Heart left ventricle (tissue), 16 donors: ENCODE measurements at regions of chr11 and their contacts with region 1.

Region 1: GRCh38 chr11:72585762-72586311 is 88.4 kb downstream of the PDE2A start:
- DNase-seq: peak; percentile 52 to 76 (median 59)
- ATAC-seq: peak; percentile 55 to 72 (median 66)
- H3K4me3 ChIP-seq: no peak overlapping the region
- H3K27ac ChIP-seq: no peak overlapping the region
- H3K4me1 ChIP-seq: peaks cover 0 to 34% (median 11%) of the 10 kb centered on the region in 12 donors
- H3K27me3 ChIP-seq: peaks cover 0 to 53% (median 29%) of the 10 kb centered on the region in 9 donors
- CTCF ChIP-seq: peak; percentile 90 to 96 (median 95)
- POLR2A ChIP-seq: no peak

Region 2: GRCh38 chr11:72511393-72512047 is 74.3 kb before region 1 on chr11:
- intact Hi-C with region 1: no loop called
- DNase-seq: no peak
- ATAC-seq: no peak
- H3K4me3 ChIP-seq: no peak overlapping the region
- H3K27ac ChIP-seq: no peak overlapping the region
- H3K4me1 ChIP-seq: no peaks in the 10 kb centered on the region
- H3K27me3 ChIP-seq: peaks cover 0 to 4% (median 0%) of the 10 kb centered on the region in 9 donors
- CTCF ChIP-seq: no peak
- POLR2A ChIP-seq: no peak

Region 3: DNA sequence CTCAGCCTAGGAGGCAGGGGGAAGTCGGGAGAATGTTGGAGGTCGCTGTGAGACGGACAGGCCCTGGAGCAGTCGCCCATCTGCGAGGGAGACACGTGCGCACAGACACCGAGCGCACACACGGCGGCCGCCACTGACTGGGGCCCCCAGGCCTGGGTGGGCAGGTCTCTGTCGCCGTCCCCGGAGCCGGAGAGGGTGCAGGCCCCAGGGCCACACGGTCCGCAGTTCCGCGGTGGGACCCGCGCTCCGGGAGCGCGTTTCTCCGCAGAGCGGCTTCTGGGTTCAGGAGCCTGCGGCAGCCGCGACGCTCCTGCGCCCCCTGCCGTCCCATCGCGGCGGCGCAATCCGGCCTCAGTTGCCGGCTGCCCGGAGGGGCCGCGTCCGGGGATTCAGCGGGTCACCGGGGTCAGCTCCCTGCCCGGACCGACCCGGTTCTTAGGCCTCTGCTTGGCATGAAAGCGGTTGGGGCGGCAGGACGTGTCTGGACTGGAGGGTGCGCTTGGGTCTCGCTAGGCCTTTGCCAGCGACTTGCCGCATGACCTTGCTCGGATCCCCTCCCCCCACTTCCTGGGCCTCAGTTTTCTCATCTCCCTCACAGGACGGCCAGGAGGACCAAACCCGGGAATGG is 57.2 kb after region 1 on chr11:
- intact Hi-C with region 1: loop called in 6 of 10 experiments (anchors 1 to 5 kb)
- DNase-seq: peak; percentile 41 to 84 (median 62)
- ATAC-seq: peak; percentile 33 to 82 (median 72)
- H3K4me3 ChIP-seq: peak overlapping the region; percentile 54 to 88 (median 72)
- H3K27ac ChIP-seq: peak overlapping the region in 9 of 12 donors; percentile 8 to 82 (median 43)
- H3K4me1 ChIP-seq: peaks cover 2 to 43% (median 20%) of the 10 kb centered on the region in 12 donors
- H3K27me3 ChIP-seq: peaks cover 0 to 29% (median 0%) of the 10 kb centered on the region in 9 donors
- CTCF ChIP-seq: peak; percentile 95 to 100 (median 98)
- POLR2A ChIP-seq: no peak

Region 4: DNA sequence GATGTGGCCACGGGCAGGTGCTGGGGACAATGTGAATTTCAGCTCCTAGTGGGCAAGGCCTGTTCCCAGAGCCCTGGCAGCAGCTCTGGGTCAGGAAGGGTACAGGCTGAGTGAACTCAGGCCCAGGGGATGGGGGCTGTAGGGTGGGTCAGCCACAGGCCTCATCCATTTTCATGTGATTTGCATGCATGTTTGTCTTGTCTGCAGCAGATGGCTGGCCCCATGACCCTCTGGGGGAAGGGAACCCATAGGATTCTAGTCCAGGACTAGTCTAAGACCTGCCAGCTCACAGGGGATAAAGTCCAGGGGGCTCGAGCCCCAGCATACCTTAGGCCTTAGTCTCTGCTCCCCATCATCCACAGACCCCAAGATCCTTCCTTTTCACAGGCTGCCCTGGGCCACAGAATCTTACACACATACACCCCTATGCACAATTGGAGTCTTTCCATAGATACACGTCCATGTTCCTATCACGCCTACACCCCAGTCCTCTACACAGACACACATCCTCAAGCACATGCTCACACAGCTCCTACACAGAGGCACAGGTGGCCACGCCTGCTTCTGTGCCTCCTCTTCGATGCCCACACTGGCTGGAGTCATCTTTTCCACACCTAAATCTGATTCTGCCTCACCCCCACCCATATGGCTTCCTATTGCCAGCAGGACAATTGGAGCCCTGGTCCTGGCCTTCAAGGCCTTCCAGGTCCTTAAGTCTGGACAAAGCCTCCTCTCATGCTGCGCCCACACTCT is 62.7 kb after region 1 on chr11:
- intact Hi-C with region 1: loop called in 6 of 10 experiments (anchors 1 to 5 kb)
- DNase-seq: no peak
- ATAC-seq: no peak
- H3K4me3 ChIP-seq: no peak overlapping the region
- H3K27ac ChIP-seq: no peak overlapping the region
- H3K4me1 ChIP-seq: peaks cover 0 to 2% (median 0%) of the 10 kb centered on the region in 12 donors
- H3K27me3 ChIP-seq: no peaks in the 10 kb centered on the region
- CTCF ChIP-seq: no peak
- POLR2A ChIP-seq: no peak

Region 5: GRCh38 chr11:72683782-72684200 is 98.0 kb after region 1 on chr11:
- intact Hi-C with region 1: loop called in 8 of 10 experiments (anchors 1 to 5 kb)
- DNase-seq: peak; percentile 53 to 83 (median 65)
- ATAC-seq: peak; percentile 43 to 60 (median 46)
- H3K4me3 ChIP-seq: no peak overlapping the region
- H3K27ac ChIP-seq: peak overlapping the region in 6 of 12 donors; percentile 38 to 72 (median 66)
- H3K4me1 ChIP-seq: peaks cover 0 to 61% (median 31%) of the 10 kb centered on the region in 12 donors
- H3K27me3 ChIP-seq: peaks cover 0 to 4% (median 0%) of the 10 kb centered on the region in 9 donors
- CTCF ChIP-seq: peak; percentile 79 to 95 (median 89)
- POLR2A ChIP-seq: no peak

Region 6: DNA sequence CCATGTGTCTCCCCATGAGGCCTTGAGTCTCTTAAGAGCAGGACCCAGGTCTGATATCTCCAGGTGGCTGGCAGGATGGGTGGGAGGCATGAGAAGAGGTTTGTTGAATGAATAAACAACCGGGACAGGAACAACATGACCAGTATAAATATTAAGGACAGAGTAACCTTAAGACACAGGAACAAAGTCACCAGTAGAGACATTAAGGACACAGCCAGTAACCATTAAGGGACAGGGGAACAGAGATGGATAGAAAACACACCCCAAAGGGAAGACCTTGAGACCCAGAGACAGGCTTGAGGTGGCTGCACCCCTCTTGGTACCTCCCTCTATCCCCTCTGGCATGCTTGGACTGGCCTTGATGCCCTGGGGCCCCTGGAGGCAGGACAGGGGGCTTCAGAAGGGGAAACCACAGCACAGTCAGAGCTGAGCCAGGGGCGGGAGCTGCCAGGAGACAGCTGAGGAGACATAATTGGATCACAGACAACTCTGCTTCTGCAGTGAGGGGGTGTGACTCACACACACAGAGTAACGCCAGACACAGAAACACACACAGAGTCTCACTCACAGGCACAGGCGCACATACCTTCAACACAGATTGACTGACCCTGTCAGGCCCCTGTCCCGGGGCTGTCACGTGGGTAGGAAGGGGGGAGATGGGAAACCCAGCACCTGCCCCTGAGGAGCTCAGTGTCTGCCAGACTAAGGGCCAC is 187.3 kb after region 1 on chr11:
- intact Hi-C with region 1: loop called in 1 of 10 experiments (anchors 5 kb)
- DNase-seq: peak in 4 of 5 donors; percentile 57 to 73 (median 71)
- ATAC-seq: peak; percentile 59 to 84 (median 82)
- H3K4me3 ChIP-seq: no peak overlapping the region
- H3K27ac ChIP-seq: peak overlapping the region in 8 of 12 donors; percentile 23 to 71 (median 52)
- H3K4me1 ChIP-seq: peaks cover 0 to 37% (median 23%) of the 10 kb centered on the region in 12 donors
- H3K27me3 ChIP-seq: no peaks in the 10 kb centered on the region
- CTCF ChIP-seq: no peak
- POLR2A ChIP-seq: no peak

Region 7: GRCh38 chr11:72793425-72794367 is 207.9 kb after region 1 on chr11 and contains the start of gene STARD10:
- intact Hi-C with region 1: loop called in 1 of 10 experiments (anchors 10 kb)
- DNase-seq: peak; percentile 96 to 98 (median 97)
- ATAC-seq: peak; percentile 95 to 96 (median 96)
- H3K4me3 ChIP-seq: peak within 1 kb of the TSS; percentile 49 to 80 (median 68)
- H3K27ac ChIP-seq: peak within 1 kb of the TSS; percentile 51 to 97 (median 92)
- H3K4me1 ChIP-seq: peaks cover 0 to 37% (median 28%) of the 10 kb centered on the region in 12 donors
- H3K27me3 ChIP-seq: no peaks in the 10 kb centered on the region
- CTCF ChIP-seq: peak; percentile 94 to 100 (median 98)
- POLR2A ChIP-seq: peak in 1 of 2 donors; percentile 52
- total RNA-seq, gene STARD10: 35.2 to 78.8 (median 55.2) TPM